SK-N-SH (cell line): ENCODE measurements at regions of chr5 and their contacts with region 1.

Region 1: DNA sequence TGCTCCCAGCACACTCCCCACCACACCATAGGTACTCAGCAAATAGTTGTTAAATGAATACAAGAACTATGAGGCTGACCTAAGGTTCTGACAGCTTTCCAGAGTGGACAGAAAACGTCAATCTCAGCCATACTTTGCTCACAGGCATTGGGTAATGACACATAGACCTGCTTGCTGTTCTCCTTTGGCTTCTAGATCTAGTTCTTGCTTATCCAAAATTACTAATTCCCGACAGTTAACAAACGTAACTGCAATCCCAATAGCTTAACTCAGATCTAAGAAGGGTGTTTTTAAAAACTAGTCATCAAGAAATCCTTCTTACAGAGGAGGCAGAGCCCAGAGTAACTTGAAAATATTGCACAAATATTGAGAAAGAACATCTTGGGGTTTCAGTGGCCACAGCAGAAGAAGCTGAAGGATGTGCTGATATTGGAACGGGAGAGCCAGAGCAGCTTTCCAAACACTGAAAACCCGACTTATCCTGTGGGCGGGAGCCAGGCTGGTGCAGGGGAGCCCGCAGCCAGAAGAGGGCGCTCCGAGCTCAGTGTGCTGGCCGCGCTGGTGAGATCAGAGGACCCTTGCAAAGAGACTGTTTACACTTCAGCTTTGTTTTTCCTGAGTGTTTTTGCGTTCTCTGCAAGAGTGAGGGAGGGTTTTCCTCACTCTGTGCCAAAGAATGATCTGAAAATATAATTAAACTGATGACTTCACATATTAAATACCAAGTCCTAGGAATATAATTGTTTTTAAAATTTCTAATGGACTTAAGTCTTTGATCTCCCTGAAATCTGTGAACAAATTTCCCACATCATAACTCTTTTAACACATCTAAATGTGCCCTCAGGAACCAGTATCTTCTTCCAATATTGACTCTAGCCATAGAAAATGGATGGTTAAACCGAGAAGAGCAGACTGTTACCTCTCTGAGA is 30.3 kb downstream of the FGF1 start:
- DNase-seq: peak; percentile 91
- H3K4me3 ChIP-seq: no peak overlapping the region; a peak in 1 of 4 replicates
- H3K27ac ChIP-seq: no peak overlapping the region; a peak in 1 of 4 replicates
- H3K4me1 ChIP-seq: peaks cover 4 to 5% of the 10 kb centered on the region in 2 experiments; a peak in 2 of 4 replicates
- H3K27me3 ChIP-seq: no peaks in the 10 kb centered on the region
- CTCF ChIP-seq: peak; percentile 99
- EP300 ChIP-seq: no peak
- RAD21 ChIP-seq: peak; percentile 99

Region 2: GRCh38 chr5:142491270-142491669 is 164.3 kb before region 1 on chr5:
- CTCF ChIA-PET with region 1: no interaction called
- POLR2A ChIA-PET with region 1: no interaction called
- DNase-seq: no peak
- H3K4me3 ChIP-seq: no peak overlapping the region
- H3K27ac ChIP-seq: no peak overlapping the region; a peak in 1 of 4 replicates
- H3K4me1 ChIP-seq: peaks cover 15 to 17% of the 10 kb centered on the region in 2 experiments
- H3K27me3 ChIP-seq: no peaks in the 10 kb centered on the region
- CTCF ChIP-seq: no peak
- EP300 ChIP-seq: no peak
- RAD21 ChIP-seq: no peak

Region 3: DNA sequence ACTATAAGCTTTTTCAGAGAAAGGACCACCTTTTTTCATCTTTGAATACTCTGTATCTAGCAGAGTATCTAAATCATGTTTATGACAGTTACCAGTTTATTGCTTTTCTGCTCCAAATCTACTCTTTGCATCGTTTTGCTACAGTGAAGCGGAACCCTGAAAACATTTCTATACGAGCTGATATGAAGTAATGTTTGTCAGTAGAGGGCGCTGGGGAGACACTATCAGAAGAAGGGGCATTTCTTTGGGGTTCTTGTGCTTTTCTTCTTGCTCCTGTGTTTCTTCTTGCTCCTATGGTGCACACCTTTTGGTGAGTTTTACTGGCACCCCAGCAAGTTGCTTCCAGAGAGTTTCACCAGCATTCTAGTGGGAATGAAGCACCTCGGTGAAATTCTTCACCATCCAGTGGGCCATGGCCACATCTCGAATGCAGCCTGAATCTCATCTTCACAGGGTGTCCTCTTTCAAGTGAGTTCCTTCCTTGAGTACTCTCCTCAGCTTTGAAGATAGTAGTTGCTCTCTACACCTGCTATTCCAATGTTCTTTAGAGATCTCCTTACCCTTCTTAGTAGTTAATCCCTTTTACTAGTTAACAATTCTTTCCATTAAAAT is 68.1 kb before region 1 on chr5:
- CTCF ChIA-PET with region 1: interaction called, 18 read pairs
- POLR2A ChIA-PET with region 1: no interaction called
- DNase-seq: no peak
- H3K4me3 ChIP-seq: no peak overlapping the region
- H3K27ac ChIP-seq: no peak overlapping the region
- H3K4me1 ChIP-seq: peaks cover 2 to 6% of the 10 kb centered on the region in 2 experiments; a peak in 2 of 4 replicates
- H3K27me3 ChIP-seq: no peaks in the 10 kb centered on the region
- CTCF ChIP-seq: peak; percentile 61
- EP300 ChIP-seq: no peak
- RAD21 ChIP-seq: peak; percentile 50

Region 4: DNA sequence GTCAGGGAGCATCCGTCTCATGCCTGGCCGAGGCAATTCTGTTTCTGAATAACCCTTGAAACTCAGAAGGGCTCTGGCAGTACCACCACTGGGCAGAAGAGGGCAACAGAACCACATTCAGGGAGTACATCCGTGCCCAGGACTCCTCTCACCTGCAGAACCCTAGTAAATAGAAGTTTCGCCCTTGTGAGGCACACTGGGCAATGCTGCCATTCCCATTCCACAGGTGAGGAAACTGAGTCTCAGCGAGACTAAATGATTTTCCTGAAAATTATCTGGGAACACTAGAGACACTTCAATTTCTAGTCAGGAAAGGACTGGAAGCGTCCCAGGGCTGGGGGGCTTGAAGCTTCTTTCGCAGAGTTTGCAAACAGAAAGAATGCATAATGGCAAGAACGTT is 44.4 kb before region 1 on chr5:
- CTCF ChIA-PET with region 1: interaction called, 77 read pairs
- POLR2A ChIA-PET with region 1: no interaction called
- DNase-seq: peak; percentile 76
- H3K4me3 ChIP-seq: no peak overlapping the region
- H3K27ac ChIP-seq: no peak overlapping the region
- H3K4me1 ChIP-seq: peaks cover 2 to 14% of the 10 kb centered on the region in 2 experiments; a peak in 2 of 4 replicates
- H3K27me3 ChIP-seq: no peaks in the 10 kb centered on the region
- CTCF ChIP-seq: peak; percentile 85
- EP300 ChIP-seq: no peak
- RAD21 ChIP-seq: peak; percentile 98

Region 5: DNA sequence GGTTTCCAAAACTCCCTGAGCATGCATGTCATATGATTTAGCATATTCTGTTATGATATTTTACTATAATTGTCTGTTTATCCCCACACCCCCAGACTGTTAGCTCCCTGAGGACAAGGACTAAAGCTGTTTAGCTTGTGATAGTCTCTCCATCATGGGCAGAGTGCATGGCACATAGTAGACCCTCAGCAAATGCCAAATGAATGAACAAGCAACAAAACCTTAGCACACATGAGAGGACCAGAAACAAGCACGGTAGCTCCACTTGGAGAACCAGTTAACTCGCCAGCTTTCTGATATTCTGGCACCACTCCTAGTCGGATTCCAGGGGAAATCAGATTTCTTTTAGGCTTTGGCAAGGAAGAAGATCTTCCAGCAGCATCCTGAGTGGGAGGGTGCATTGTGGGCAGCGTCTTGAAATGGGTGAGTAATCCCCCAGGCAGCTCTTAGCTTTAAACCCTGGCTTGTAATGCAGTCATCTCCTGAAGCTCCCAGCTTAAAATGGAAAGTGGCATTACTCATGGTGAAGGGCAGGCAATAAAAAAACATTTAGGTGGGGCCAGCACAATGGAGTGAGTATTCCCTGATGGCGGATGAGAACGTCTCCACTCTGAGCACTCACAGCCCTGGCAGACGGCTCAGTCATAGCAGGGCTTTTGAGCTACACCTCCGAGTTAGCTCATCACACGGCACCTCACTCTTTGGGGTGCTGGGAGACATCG is 10.8 kb before region 1 on chr5:
- CTCF ChIA-PET with region 1: interaction called, 154 read pairs
- POLR2A ChIA-PET with region 1: no interaction called
- DNase-seq: no peak
- H3K4me3 ChIP-seq: peak overlapping the region in 1 of 2 experiments; percentile 12; a peak in 1 of 4 replicates
- H3K27ac ChIP-seq: peak overlapping the region; percentile 64 to 92
- H3K4me1 ChIP-seq: peaks cover 8 to 36% of the 10 kb centered on the region in 2 experiments
- H3K27me3 ChIP-seq: no peaks in the 10 kb centered on the region
- CTCF ChIP-seq: no peak
- EP300 ChIP-seq: peak in 1 of 2 experiments; percentile 88; a peak in 2 of 4 replicates
- RAD21 ChIP-seq: no peak

Region 6: GRCh38 chr5:142685418-142686209 is 30.0 kb after region 1 on chr5 and contains the start of gene FGF1:
- CTCF ChIA-PET with region 1: interaction called, 668 read pairs
- POLR2A ChIA-PET with region 1: interaction called, 6 read pairs
- DNase-seq: peak; percentile 76
- H3K4me3 ChIP-seq: no peak within 1 kb of the TSS
- H3K27ac ChIP-seq: peak within 1 kb of the TSS in 1 of 2 experiments; percentile 95; a peak in 2 of 4 replicates
- H3K4me1 ChIP-seq: peaks cover 15 to 52% of the 10 kb centered on the region in 2 experiments; a peak in 3 of 4 replicates
- H3K27me3 ChIP-seq: no peaks in the 10 kb centered on the region
- CTCF ChIP-seq: no peak
- EP300 ChIP-seq: no peak
- RAD21 ChIP-seq: no peak
- polyA plus RNA-seq, gene FGF1: 5.3 and 5.9 TPM in 2 replicates

Region 7: GRCh38 chr5:142830241-142830989 is 174.8 kb after region 1 on chr5:
- CTCF ChIA-PET with region 1: no interaction called
- POLR2A ChIA-PET with region 1: no interaction called
- DNase-seq: no peak
- H3K4me3 ChIP-seq: peak overlapping the region; percentile 1 to 28; a peak in 1 of 4 replicates
- H3K27ac ChIP-seq: peak overlapping the region; percentile 61 to 93
- H3K4me1 ChIP-seq: peaks cover 45 to 55% of the 10 kb centered on the region in 2 experiments
- H3K27me3 ChIP-seq: no peaks in the 10 kb centered on the region
- CTCF ChIP-seq: no peak
- EP300 ChIP-seq: peak in 1 of 2 experiments; percentile 63; a peak in 1 of 4 replicates
- RAD21 ChIP-seq: no peak